GM18951 (cell line): ENCODE measurements at regions of chr1 and their contacts with region 1.

Region 1: DNA sequence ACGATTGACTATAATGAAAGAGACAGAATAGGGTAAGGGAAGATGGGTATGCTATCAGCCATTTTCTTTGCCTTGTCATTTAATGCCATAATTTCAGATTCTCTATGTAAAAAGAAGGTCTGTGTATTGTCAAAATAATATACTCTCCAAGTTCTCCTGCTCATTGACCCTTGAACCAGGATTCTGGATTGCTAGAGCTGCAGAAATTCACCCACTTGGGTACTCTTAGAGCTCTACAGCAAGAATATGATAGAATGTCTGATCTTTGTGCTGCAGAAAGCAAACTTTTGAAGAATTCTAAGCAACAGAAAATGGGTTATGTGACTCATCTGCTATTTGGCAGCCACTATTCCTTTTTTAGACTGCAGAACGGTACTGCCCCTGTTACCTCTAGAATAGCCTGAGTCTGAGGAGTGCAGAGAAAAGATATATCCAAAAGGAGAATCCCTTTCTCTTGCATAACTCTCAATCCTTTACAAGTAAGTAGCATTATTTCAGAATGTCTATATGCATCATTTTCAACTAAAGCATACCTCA is 78.2 kb upstream of the TENT5C start:
- POLR2A ChIP-seq: no peak

Region 2: GRCh38 chr1:117674521-117675397 is 147.1 kb after region 1 on chr1:
- in situ Hi-C with region 1: loop called (anchors 10 kb)
- POLR2A ChIP-seq: no peak

Region 3: DNA sequence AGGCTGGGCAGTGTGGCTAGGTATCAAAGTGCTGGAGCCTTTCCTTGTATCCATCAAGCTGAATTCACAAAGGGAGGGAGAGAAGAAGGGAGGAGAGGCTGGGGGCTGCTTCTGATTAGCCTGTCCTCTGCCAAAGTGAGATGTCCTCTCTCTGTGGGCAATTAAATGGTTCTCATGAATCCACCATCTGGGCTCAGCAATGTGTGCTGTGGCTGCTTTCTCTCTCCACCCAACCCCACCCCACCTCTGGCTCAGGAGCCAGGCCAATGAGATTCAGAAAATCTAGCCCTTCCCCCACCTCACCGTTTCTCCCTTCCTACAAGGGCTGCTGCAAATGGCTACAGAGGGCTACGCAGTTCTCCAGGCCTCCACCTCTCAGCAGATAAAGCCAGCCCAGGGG is 232.9 kb after region 1 on chr1:
- in situ Hi-C with region 1: loop called (anchors 10 kb)
- POLR2A ChIP-seq: no peak

Region 4: DNA sequence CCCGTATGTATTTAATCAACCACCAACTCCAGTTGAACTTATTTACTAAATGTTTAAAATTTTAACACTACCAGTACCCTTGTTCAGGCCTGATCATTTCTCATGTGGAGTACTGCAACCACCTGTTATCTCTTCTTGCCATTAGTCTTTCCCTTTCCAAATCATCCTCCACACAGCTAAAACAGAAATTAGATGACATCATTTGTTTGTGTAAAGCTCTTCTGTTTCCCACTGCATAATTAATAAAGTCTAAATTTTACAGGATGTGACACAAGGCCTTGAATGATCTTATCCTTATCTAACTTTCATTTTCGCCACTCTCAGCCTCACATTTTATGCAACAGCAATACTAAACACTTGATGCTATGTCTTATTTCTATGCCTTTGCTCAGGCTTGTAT is 377.4 kb after region 1 on chr1:
- in situ Hi-C with region 1: loop called (anchors 10 kb)
- POLR2A ChIP-seq: no peak